HCT116 (cell line): ENCODE measurements at regions of chr5 and their contacts with region 1.

Region 1: GRCh38 chr5:157312492-157312891 is 46.6 kb downstream of the CYFIP2 start:
- DNase-seq: peak; percentile 67
- ATAC-seq: peak; percentile 96
- H3K4me3 ChIP-seq: no peak overlapping the region
- H3K27ac ChIP-seq: no peak overlapping the region
- H3K4me1 ChIP-seq: peaks cover 0 to 7% of the 10 kb centered on the region in 2 experiments; a peak in 1 of 4 replicates
- H3K27me3 ChIP-seq: no peaks in the 10 kb centered on the region
- CTCF ChIP-seq: peak; percentile 71 to 81 (median 73); a peak in 5 of 6 replicates
- POLR2A ChIP-seq: no peak
- RAD21 ChIP-seq: peak; percentile 62

Region 2: GRCh38 chr5:157148734-157149615 is 163.5 kb before region 1 on chr5:
- CTCF ChIA-PET with region 1: interaction called, 4 read pairs
- POLR2A ChIA-PET with region 1: no interaction called
- RAD21 ChIA-PET with region 1: no interaction called
- intact Hi-C with region 1: loop called (anchors 1 kb)
- DNase-seq: peak; percentile 61
- ATAC-seq: peak; percentile 95
- H3K4me3 ChIP-seq: no peak overlapping the region
- H3K27ac ChIP-seq: no peak overlapping the region
- H3K4me1 ChIP-seq: no peaks in the 10 kb centered on the region
- H3K27me3 ChIP-seq: no peaks in the 10 kb centered on the region
- CTCF ChIP-seq: peak; percentile 77 to 86 (median 86)
- POLR2A ChIP-seq: no peak
- RAD21 ChIP-seq: peak; percentile 82

Region 3: DNA sequence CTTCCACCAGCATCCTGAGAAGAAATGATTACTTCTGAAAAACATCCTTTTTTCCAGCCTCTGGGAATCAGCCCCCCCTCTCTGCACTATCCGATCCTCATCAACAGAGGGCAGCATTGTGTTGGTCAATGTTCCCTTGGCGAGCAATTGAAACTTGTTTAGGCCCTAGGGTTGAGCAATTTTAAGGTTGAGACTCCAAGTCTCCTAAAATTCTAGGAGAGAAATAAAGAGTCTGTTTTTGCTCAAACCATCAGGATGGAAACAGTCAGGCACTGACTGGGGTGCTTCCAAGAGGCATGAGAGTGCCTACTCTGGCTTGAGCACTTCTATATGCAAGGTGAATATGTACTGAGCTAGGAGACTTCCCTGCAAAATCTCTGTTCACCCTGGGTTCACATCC is 58.9 kb before region 1 on chr5:
- CTCF ChIA-PET with region 1: interaction called, 14 read pairs
- POLR2A ChIA-PET with region 1: no interaction called
- RAD21 ChIA-PET with region 1: no interaction called
- intact Hi-C with region 1: loop called (anchors 1 kb)
- DNase-seq: peak; percentile 28
- ATAC-seq: peak; percentile 97
- H3K4me3 ChIP-seq: no peak overlapping the region
- H3K27ac ChIP-seq: no peak overlapping the region
- H3K4me1 ChIP-seq: no peaks in the 10 kb centered on the region
- H3K27me3 ChIP-seq: no peaks in the 10 kb centered on the region
- CTCF ChIP-seq: peak; percentile 84 to 91 (median 88)
- POLR2A ChIP-seq: no peak
- RAD21 ChIP-seq: peak; percentile 89

Region 4: DNA sequence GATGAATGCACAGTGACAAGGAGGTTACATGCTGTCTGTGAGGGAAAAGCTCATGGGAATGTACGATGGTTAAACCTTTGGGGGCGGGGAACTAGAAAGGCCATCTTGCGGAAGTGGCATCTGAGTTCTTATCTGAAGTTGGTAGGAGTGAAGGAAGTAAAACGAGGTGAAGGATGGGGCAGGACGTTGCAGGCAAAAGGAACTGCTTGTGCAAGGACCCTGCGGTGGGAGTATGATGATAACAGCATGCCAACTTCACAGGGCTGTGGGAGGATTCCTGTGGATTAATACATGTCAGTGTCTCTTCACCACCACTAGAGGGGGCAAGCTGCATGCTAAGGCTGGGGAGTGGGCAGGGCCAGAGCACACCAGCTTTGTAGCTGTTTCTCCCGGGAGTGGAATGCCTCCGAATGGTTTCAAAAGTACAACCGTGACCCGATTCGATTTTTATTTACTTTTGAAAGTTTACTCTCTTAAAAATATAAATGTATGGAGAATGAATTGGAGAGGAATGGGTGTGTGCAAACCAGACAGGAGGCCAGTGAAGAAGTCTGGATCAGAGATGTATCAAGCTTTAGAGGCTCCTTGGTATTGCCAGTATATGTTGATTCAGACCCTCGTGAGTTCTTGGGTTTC is 15.9 kb after region 1 on chr5:
- CTCF ChIA-PET with region 1: interaction called, 10 read pairs
- POLR2A ChIA-PET with region 1: no interaction called
- RAD21 ChIA-PET with region 1: no interaction called
- intact Hi-C with region 1: no loop called
- DNase-seq: peak; percentile 58
- ATAC-seq: peak; percentile 98
- H3K4me3 ChIP-seq: 0 out of 4 replicates have a peak overlapping the region, but pooled peaks of 1 of the 2 experiments have one; percentile 12
- H3K27ac ChIP-seq: no peak overlapping the region
- H3K4me1 ChIP-seq: peaks cover 0 to 4% of the 10 kb centered on the region in 2 experiments; a peak in 1 of 4 replicates
- H3K27me3 ChIP-seq: no peaks in the 10 kb centered on the region
- CTCF ChIP-seq: peak; percentile 92 to 95 (median 92)
- POLR2A ChIP-seq: no peak
- RAD21 ChIP-seq: peak; percentile 91

Region 5: GRCh38 chr5:157464519-157465171 is 152.2 kb after region 1 on chr5:
- CTCF ChIA-PET with region 1: no interaction called
- POLR2A ChIA-PET with region 1: no interaction called
- RAD21 ChIA-PET with region 1: no interaction called
- intact Hi-C with region 1: no loop called
- DNase-seq: peak; percentile 76
- ATAC-seq: peak; percentile 83
- H3K4me3 ChIP-seq: peak overlapping the region in 1 of 2 experiments; percentile 26; a peak in 2 of 4 replicates
- H3K27ac ChIP-seq: peak overlapping the region; percentile 48
- H3K4me1 ChIP-seq: peaks cover 24 to 41% of the 10 kb centered on the region in 2 experiments
- H3K27me3 ChIP-seq: no peaks in the 10 kb centered on the region
- CTCF ChIP-seq: no peak
- POLR2A ChIP-seq: no peak
- RAD21 ChIP-seq: 0 out of 2 replicates have a peak, but pooled peaks have one; percentile 6